Activated CD8-positive, alpha-beta T cell treated with anti-CD3 and anti-CD28 coated beads for 36 hours (primary cell): ENCODE measurements at regions of chr16 and their contacts with region 1.

Region 1: GRCh38 chr16:66728117-66728787 is 23.2 kb downstream of the DYNC1LI2 start:
- DNase-seq: no peak
- ATAC-seq: peak; percentile 80
- H3K4me3 Mint-ChIP-seq: no peak overlapping the region
- H3K27ac Mint-ChIP-seq: peak overlapping the region; percentile 65
- H3K4me1 Mint-ChIP-seq: peaks cover 4% of the 10 kb centered on the region
- H3K27me3 Mint-ChIP-seq: no peaks in the 10 kb centered on the region
- CTCF ChIP-seq: peak; percentile 72

Region 2: GRCh38 chr16:66391726-66392670 is 336.3 kb before region 1 on chr16:
- CTCF ChIA-PET with region 1: no interaction called
- POLR2A ChIA-PET with region 1: no interaction called
- intact Hi-C with region 1: no loop called
- DNase-seq: no peak
- ATAC-seq: no peak
- H3K4me3 Mint-ChIP-seq: no peak overlapping the region
- H3K27ac Mint-ChIP-seq: no peak overlapping the region
- H3K4me1 Mint-ChIP-seq: no peaks in the 10 kb centered on the region
- H3K27me3 Mint-ChIP-seq: peaks cover 2% of the 10 kb centered on the region
- CTCF ChIP-seq: no peak

Region 3: GRCh38 chr16:66588981-66589713 is 139.1 kb before region 1 on chr16:
- CTCF ChIA-PET with region 1: no interaction called
- POLR2A ChIA-PET with region 1: no interaction called
- intact Hi-C with region 1: no loop called
- DNase-seq: peak; percentile 79
- ATAC-seq: peak; percentile 96
- H3K4me3 Mint-ChIP-seq: peak overlapping the region; percentile 69
- H3K27ac Mint-ChIP-seq: no peak overlapping the region
- H3K4me1 Mint-ChIP-seq: peaks cover 36% of the 10 kb centered on the region
- H3K27me3 Mint-ChIP-seq: no peaks in the 10 kb centered on the region
- CTCF ChIP-seq: peak; percentile 81

Region 4: DNA sequence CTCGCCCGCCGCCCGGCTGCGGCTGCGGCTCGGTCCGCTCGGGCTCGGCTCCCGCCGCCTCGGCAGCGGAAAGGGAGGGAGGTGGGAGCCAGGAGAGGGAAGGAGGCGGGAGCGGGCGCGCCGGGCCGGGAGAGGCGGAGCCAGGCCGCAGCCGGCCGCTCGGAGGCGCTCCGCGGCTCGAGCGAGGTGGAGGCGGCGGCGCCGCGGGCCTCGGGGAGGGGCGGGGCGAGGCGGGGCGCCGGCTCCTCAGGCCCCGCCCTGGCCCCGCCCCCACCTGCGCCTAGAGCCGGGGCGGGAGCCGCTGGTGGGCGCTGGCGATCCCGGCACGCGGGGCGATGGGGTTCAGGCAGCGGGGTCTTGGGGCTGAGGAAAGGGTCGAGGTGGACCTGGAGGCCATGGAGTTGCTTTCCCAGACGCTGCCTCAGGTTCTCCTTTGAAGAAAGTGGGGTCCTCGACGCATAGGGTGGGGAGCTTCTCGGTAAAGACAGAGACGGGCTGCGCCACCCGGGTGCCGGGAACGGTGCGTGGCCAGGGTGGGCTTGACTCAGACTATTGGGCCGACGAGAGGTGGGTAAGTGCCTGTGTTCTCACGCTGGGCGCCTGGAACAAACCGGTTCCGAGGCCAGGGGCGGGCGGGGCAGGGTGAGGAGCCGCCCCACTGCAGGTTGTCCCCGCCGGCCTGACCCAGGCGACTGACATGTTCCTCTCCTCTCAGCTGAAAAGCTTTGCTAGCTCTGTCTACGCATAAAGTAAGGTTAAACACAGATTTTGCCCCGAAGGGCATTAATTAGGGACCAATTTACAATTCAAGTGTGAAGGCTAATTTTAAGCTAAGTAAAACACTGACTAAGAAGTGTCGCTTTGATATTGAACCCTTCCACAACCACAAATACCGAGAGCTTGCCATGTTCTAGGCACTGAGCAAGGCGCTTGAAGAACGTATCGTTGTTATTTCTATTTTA is 31.3 kb before region 1 on chr16 and contains the start of gene CMTM4:
- CTCF ChIA-PET with region 1: interaction called, 14 read pairs
- POLR2A ChIA-PET with region 1: no interaction called
- intact Hi-C with region 1: no loop called
- DNase-seq: peak; percentile 70
- ATAC-seq: peak; percentile 97
- H3K4me3 Mint-ChIP-seq: peak within 1 kb of the TSS; percentile 74
- H3K27ac Mint-ChIP-seq: no peak within 1 kb of the TSS
- H3K4me1 Mint-ChIP-seq: peaks cover 12% of the 10 kb centered on the region
- H3K27me3 Mint-ChIP-seq: peaks cover 13% of the 10 kb centered on the region
- CTCF ChIP-seq: peak; percentile 29
- total RNA-seq, gene CMTM4: 3.2 to 3.5 TPM

Region 5: DNA sequence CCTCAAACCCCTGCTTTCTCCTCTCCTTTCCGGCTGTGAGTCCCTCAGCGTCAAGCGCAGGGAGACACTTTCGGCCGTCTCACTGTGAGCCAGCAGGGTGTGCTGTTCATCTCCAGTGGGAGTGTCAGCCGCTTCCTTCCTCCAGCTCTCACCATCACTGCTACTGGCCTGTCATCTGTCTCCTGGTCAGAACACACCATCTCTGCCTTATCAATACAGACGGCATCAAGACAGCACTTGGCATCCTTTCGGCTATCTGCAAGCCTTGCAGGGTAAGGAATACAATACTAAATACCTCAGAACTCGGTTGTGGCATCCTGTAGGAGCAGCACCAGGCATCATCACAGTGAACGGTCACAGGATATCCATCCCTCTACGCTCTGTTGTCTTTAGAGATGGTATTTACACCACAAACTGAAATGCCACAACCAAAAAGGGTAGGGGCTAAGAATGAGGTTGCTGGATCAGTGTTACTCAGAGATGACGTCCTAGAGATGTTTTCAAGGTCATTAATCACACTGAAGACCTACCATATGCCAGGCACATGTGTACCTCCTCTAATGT is 11.1 kb before region 1 on chr16:
- CTCF ChIA-PET with region 1: interaction called, 25 read pairs
- POLR2A ChIA-PET with region 1: interaction called, 3 read pairs
- intact Hi-C with region 1: no loop called
- DNase-seq: peak; percentile 38
- ATAC-seq: peak; percentile 68
- H3K4me3 Mint-ChIP-seq: no peak overlapping the region
- H3K27ac Mint-ChIP-seq: no peak overlapping the region
- H3K4me1 Mint-ChIP-seq: no peaks in the 10 kb centered on the region
- H3K27me3 Mint-ChIP-seq: peaks cover 3% of the 10 kb centered on the region
- CTCF ChIP-seq: no peak

Region 6: GRCh38 chr16:66740010-66740409 is 11.8 kb after region 1 on chr16:
- CTCF ChIA-PET with region 1: interaction called, 83 read pairs
- POLR2A ChIA-PET with region 1: interaction called, 7 read pairs
- intact Hi-C with region 1: no loop called
- DNase-seq: peak; percentile 61
- ATAC-seq: peak; percentile 76
- H3K4me3 Mint-ChIP-seq: no peak overlapping the region
- H3K27ac Mint-ChIP-seq: peak overlapping the region; percentile 8
- H3K4me1 Mint-ChIP-seq: peaks cover 16% of the 10 kb centered on the region
- H3K27me3 Mint-ChIP-seq: no peaks in the 10 kb centered on the region
- CTCF ChIP-seq: peak; percentile 66